ENCODE measurements at regions of chrX and their contacts with region 1.

Region 1: GRCh38 chrX:19758539-19758938 is 128.9 kb downstream of the SH3KBP1 start:
- DNase-seq: peak; percentile 59 to 89 (median 83)
- H3K4me3 ChIP-seq: no peak overlapping the region
- H3K27ac ChIP-seq: peak overlapping the region in 1 of 2 experiments; percentile 12
- H3K4me1 ChIP-seq: peaks cover 0 to 18% (median 5%) of the 10 kb centered on the region in 4 experiments
- H3K27me3 ChIP-seq: no peaks in the 10 kb centered on the region

Region 2: DNA sequence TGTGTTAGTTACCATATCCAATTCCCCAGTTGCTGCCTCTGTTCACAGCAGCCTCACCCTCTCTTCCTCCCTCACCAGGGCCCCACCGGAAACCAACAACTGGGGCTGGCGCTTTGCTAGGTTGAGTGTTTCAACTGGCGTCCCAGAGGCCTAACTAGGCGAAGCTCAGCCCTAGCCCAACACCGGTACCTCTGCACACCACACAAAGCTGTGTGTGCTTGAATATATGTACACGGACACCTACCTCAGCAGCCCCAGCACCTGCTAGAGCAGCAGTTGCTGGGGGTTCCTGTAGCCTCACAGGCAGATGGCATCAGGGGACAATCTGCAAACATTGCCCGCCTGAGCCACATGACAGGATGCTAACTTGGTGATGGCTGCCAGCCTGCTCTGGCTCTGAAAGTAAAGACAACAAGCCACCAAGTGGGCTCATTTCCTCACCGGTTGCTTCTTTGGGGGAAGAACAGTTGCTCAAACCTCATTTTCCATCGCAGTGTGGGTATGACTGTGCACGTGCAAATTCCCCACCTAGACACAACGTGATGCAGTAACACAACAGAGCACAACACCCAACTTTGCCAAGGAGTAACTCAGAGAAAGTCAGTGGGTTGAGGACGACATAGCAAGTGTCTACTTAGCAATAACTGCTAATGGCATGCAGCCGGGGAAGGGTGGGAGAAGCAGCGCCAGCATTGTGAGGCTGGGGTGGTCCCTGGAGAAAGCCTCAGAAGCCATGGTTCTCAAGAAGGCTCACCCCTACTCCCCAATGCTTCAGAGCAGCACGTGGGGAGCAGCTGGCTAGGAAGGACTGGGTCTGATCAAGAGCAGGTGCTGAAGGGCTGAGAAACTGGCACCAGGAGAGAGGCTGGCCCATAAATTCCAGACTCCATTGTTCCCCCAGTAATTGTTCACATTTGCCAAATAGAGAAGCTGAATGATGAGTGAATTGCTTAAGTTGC is 10.6 kb before region 1 on chrX:
- CTCF ChIA-PET with region 1: interaction called, 18 read pairs
- POLR2A ChIA-PET with region 1: interaction called, 3 read pairs
- DNase-seq: peak; percentile 38 to 91 (median 80)
- H3K4me3 ChIP-seq: peak overlapping the region in 1 of 7 experiments; percentile 23
- H3K27ac ChIP-seq: peak overlapping the region; percentile 10 to 65
- H3K4me1 ChIP-seq: peaks cover 28 to 57% (median 40%) of the 10 kb centered on the region in 4 experiments
- H3K27me3 ChIP-seq: no peaks in the 10 kb centered on the region

Measured in common myeloid progenitor, CD34-positive (primary cell).